ENCODE measurements at regions of chr12 and their contacts with region 1.

Region 1: GRCh38 chr12:122013791-122014590 is 7.7 kb upstream of the BCL7A start:
- DNase-seq: no peak
- H3K4me3 ChIP-seq: no peak overlapping the region
- H3K4me3 Mint-ChIP-seq: no peak overlapping the region
- H3K27ac Mint-ChIP-seq: no peak overlapping the region
- H3K4me1 ChIP-seq: no peaks in the 10 kb centered on the region
- H3K4me1 Mint-ChIP-seq: no peaks in the 10 kb centered on the region
- H3K27me3 ChIP-seq: no peaks in the 10 kb centered on the region
- H3K27me3 Mint-ChIP-seq: no peaks in the 10 kb centered on the region
- CTCF ChIP-seq: no peak

Region 2: DNA sequence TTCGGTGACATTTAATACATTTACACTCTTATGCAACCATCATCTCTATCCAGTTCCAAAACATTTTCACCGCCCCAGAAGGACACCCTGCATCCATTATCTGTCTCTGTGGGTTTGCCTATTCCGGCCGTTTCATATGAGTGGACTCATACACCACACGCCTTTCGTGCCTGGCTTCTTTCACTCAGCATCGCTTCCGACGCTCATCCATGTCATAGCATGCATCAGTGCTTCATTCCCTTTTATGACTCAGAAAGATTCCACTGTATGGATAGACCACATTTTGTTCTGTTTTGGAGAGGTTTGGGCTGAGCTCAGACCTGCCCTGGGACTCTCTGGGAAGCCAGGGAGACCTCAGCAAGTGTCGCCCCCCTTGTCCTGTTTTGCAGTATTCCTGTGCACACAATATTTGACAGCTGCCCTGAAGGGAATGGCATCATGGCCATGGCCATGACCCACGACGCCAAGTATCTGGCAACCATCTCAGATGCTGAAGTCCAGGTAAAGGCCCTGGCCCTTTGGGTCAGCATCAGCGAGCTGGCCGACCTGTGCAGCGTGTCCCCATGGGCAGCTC is 71.8 kb before region 1 on chr12:
- CTCF ChIA-PET with region 1: no interaction called
- POLR2A ChIA-PET with region 1: no interaction called
- intact Hi-C with region 1: no loop called
- DNase-seq: no peak
- H3K4me3 ChIP-seq: no peak overlapping the region
- H3K4me3 Mint-ChIP-seq: no peak overlapping the region
- H3K27ac Mint-ChIP-seq: no peak overlapping the region
- H3K4me1 ChIP-seq: peaks cover 14% of the 10 kb centered on the region; the same call in 1 of the 2 replicates
- H3K4me1 Mint-ChIP-seq: peaks cover 7% of the 10 kb centered on the region
- H3K27me3 ChIP-seq: no peaks in the 10 kb centered on the region
- H3K27me3 Mint-ChIP-seq: no peaks in the 10 kb centered on the region
- CTCF ChIP-seq: no peak

Region 3: DNA sequence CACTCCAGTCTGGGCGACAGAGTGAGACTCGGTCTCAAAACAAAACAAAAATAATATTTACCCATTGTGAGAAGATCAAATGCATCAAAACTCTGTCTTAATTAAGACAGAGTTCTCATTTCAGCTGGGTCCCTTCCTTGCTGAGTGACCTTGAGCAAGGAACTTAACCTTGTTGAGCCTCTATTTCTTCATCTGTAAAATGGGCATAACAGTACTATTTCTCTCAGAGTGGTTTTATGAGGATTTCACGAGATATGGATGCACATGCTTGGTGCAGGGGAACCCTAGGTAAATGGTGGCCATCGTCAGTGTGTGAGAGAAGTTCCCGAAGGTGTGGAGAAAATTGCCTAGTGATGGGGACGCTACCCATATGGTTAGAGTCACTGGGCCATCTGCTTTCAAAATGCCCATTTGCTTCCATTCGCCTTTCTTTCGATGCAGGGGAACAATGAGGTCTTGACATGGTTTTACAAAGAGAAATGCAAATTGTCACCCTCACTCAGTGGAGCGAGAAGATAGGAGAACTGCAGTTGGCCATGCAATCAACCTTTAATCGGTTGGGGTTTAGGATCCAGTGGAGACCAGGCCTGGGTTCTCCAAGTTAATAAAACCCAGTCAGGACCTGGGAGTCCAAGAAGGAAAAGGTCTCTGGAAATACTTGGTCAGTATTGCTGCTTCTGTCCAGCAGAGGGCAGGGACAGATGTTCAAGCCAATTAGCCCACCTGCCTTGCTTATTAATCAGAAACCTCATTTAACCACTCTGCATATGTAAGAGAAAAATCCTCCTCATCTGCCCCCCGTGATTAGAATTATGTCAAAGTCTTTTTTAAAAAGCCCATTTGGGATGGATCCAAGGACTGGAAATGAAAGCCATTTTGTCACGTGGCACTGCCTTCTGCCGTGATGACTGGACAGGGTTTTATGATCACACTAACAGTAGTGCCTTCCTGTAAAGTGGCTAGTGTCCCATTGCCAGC is 58.4 kb before region 1 on chr12:
- CTCF ChIA-PET with region 1: no interaction called
- POLR2A ChIA-PET with region 1: no interaction called
- intact Hi-C with region 1: loop called (anchors 10 kb)
- DNase-seq: peak in 1 of 2 experiments; percentile 22
- H3K4me3 ChIP-seq: no peak overlapping the region
- H3K4me3 Mint-ChIP-seq: no peak overlapping the region
- H3K27ac Mint-ChIP-seq: no peak overlapping the region
- H3K4me1 ChIP-seq: no peaks in the 10 kb centered on the region
- H3K4me1 Mint-ChIP-seq: no peaks in the 10 kb centered on the region
- H3K27me3 ChIP-seq: no peaks in the 10 kb centered on the region
- H3K27me3 Mint-ChIP-seq: no peaks in the 10 kb centered on the region
- CTCF ChIP-seq: peak; percentile 57

Measured in Caco-2 (cell line).